Activated T-helper 1 cell treated with anti-CD3 and anti-CD28 coated beads, Interleukin-12 subunit alpha, Interleukin-12 subunit beta, Interleukin-2, Interleukin-4 antibody, amounts not matched to agents 30 ng/mL and 10 ng/mL and 1 ng/mL, durations not matched to agents 14 hours and 24 hours and 36 hours (primary cell): ENCODE measurements at regions of chr5 and their contacts with region 1.

Region 1: DNA sequence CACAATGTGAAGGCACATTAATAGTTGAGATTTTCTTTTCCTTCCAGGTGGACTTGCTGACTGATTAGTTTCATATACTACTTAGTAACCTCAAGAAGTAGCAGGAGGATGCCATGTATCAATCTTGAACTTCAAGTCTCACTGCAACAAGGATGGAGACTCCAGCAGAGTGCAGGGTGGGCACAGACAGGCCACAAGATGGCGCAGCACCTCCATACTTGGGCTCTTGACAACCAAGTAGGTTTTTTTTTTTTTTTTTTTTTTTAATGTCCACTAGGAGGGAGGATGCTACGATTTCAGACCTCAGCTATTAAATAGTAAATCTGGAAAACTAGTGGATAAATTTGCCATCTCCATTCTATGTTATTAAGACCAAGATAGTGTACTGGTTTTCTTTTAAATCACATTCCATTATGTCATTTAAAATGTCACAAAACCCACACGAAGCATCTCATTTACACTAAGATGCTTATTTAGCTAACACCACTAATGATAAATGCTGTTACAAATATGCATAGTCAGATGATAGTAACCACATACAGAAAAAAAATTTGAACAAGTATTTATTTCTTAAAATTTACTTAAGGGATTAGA is 58.6 kb downstream of the IL6ST start:
- DNase-seq: peak; percentile 59
- H3K4me3 Mint-ChIP-seq: no peak overlapping the region
- H3K27ac Mint-ChIP-seq: no peak overlapping the region
- H3K4me1 Mint-ChIP-seq: peaks cover 6% of the 10 kb centered on the region
- H3K27me3 Mint-ChIP-seq: no peaks in the 10 kb centered on the region

Region 2: GRCh38 chr5:55509796-55510522 is 426.2 kb before region 1 on chr5:
- intact Hi-C with region 1: no loop called
- DNase-seq: no peak
- H3K4me3 Mint-ChIP-seq: no peak overlapping the region
- H3K27ac Mint-ChIP-seq: no peak overlapping the region
- H3K4me1 Mint-ChIP-seq: peaks cover 12% of the 10 kb centered on the region
- H3K27me3 Mint-ChIP-seq: no peaks in the 10 kb centered on the region

Region 3: GRCh38 chr5:55923177-55923771 is 12.9 kb before region 1 on chr5:
- intact Hi-C with region 1: no loop called
- DNase-seq: no peak
- H3K4me3 Mint-ChIP-seq: peak overlapping the region; percentile 82
- H3K27ac Mint-ChIP-seq: peak overlapping the region; percentile 79
- H3K4me1 Mint-ChIP-seq: peaks cover 41% of the 10 kb centered on the region
- H3K27me3 Mint-ChIP-seq: peaks cover 1% of the 10 kb centered on the region

Region 4: DNA sequence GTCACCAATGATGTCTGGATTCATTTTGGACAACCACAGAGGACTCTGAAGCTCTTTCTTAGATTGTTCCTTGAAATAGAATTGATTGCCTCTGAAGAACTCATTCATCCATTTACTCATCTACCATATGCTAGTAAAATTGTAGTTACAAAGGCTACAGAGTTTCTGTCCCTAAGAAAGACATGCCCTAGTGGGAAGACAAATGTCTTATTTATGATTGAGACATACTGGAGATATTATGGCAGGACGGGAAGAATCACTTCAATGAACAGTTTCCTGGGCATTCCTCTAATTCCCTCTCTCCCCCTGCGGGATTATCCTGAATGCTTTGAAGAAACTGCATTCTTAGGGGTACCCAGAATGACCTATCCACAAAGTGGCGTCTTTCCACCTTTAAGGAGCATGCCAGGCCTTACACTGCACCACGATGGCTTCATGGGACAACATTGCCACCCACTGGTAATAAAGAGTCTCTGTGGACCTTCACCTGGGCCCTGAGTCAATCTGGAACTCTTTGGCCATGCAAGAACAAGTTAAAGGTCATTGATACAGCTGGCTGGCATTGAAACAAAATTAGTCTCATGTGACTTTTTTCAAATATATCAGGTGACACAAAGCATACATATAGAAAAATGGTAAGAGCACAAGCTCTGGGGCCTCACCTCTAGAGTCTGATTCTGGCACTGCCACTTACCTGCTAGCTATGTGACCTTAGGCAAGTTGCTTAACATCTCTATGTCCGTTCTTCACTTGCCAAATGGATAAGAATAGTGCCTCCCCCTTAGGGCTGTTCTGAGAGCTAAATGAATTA is 264.9 kb after region 1 on chr5:
- intact Hi-C with region 1: loop called (anchors 1 kb)
- DNase-seq: peak; percentile 48
- H3K4me3 Mint-ChIP-seq: no peak overlapping the region
- H3K27ac Mint-ChIP-seq: no peak overlapping the region
- H3K4me1 Mint-ChIP-seq: peaks cover 27% of the 10 kb centered on the region
- H3K27me3 Mint-ChIP-seq: no peaks in the 10 kb centered on the region

Region 5: DNA sequence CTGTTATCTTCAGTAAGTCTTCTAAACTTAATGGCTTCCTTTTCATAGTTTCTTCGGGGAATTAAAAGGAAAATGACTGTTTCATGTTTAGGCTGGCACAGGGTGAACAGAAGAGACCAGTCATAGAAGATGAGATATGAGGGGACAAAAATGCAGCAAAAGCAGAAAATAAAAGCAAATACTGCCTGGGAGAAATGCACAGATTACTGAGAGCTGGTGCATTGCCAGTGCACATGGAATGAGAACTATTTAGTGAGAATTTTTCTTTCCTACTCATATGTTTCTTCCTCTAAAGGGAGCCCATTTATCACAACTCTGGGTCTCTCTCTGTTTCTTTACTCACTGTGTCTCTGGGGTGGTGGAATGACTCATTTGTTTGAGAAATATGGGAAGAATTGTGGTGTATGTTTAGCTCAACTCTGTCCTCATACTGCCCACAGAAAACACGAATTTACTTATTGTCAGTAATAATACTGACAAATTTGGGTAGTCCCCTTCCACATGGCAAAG is 322.9 kb after region 1 on chr5:
- intact Hi-C with region 1: loop called (anchors 2 kb)
- DNase-seq: no peak
- H3K4me3 Mint-ChIP-seq: no peak overlapping the region
- H3K27ac Mint-ChIP-seq: no peak overlapping the region
- H3K4me1 Mint-ChIP-seq: no peaks in the 10 kb centered on the region
- H3K27me3 Mint-ChIP-seq: peaks cover 14% of the 10 kb centered on the region

Region 6: DNA sequence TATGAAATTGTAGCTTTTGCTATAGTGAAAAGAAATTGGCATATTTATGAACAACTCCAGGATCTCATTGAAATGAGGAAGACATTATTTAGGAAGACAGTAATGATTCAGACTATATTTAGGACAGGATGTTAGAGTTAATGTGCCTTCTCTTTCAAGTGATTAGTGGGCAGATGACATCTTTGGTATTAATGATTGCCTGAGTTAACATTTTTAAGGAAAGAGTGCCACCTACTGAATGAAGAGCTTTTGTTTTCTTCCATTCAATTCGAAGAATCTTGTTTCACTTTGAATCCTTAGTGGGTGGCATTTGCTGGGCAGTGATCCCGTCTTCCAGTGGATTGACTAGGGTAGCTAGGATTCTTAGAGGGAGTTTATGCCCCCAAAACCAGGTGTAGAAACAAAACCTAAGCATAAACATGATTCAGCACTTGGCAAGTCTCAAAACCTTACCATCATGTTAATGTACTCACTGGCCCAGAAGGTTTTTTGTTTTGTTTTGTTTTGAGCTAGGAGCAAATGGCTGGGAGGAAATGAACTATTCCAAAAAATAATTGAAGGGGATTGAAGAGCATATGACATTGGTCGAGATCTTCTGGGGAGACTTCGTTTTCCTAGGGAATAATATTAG is 902.3 kb after region 1 on chr5:
- intact Hi-C with region 1: loop called (anchors 1 kb)
- DNase-seq: no peak
- H3K4me3 Mint-ChIP-seq: peak overlapping the region; percentile 25
- H3K27ac Mint-ChIP-seq: no peak overlapping the region
- H3K4me1 Mint-ChIP-seq: peaks cover 58% of the 10 kb centered on the region
- H3K27me3 Mint-ChIP-seq: no peaks in the 10 kb centered on the region